HEK293 (cell line): ENCODE measurements at regions of chr11 and their contacts with region 1.

Region 1: GRCh38 chr11:36385121-36385970 is 89.3 kb downstream of the PRR5L start:
- H3K4me3 ChIP-seq: no peak overlapping the region
- H3K27ac ChIP-seq: peak overlapping the region; percentile 48
- H3K4me1 ChIP-seq: no peaks in the 10 kb centered on the region
- CTCF ChIP-seq: no peak

Region 2: GRCh38 chr11:36400766-36401455 is 15.6 kb after region 1 on chr11:
- CTCF ChIA-PET with region 1: no interaction called
- POLR2A ChIA-PET with region 1: no interaction called
- H3K4me3 ChIP-seq: no peak overlapping the region
- H3K27ac ChIP-seq: no peak overlapping the region
- H3K4me1 ChIP-seq: no peaks in the 10 kb centered on the region
- CTCF ChIP-seq: no peak

Region 3: DNA sequence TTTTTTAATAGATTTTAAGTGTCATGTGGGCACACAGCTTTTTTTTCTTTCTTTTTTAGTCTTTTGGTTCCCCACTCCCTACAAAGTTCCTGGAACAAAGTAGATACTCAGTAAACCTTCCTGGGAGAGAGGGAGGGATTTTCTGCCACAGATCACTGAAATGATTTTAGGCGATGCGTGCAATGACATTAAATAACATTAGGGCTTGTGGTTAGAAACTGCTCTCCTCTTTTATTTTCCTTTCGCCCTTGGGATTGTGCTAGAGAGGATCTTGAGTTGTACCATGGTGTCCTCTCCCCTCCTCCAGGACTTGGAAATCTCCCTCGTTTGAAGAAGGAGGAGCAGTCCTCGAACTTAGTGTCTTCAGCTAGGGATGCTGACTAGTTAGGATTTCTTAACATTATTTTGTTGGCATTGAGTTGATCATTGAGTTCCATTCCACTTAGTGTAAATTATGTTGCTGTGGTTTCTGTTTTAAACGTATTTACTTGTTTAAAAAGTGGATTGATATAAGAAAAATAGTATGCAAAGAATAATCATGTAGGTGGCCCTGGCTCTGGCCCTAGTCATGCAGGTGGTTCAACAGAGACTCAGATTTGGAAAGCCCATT is 36.3 kb after region 1 on chr11:
- CTCF ChIA-PET with region 1: no interaction called
- POLR2A ChIA-PET with region 1: interaction called, 11 read pairs
- H3K4me3 ChIP-seq: no peak overlapping the region
- H3K27ac ChIP-seq: no peak overlapping the region
- H3K4me1 ChIP-seq: no peaks in the 10 kb centered on the region
- CTCF ChIP-seq: no peak

Region 4: GRCh38 chr11:36455658-36456111 is 70.3 kb after region 1 on chr11:
- CTCF ChIA-PET with region 1: interaction called, 3 read pairs
- POLR2A ChIA-PET with region 1: interaction called, 11 read pairs
- H3K4me3 ChIP-seq: no peak overlapping the region
- H3K27ac ChIP-seq: peak overlapping the region; percentile 74
- H3K4me1 ChIP-seq: peaks cover 5% of the 10 kb centered on the region; the same call in 1 of the 2 replicates
- CTCF ChIP-seq: no peak